ENCODE measurements at regions of chr10 and their contacts with region 1.

Region 1: DNA sequence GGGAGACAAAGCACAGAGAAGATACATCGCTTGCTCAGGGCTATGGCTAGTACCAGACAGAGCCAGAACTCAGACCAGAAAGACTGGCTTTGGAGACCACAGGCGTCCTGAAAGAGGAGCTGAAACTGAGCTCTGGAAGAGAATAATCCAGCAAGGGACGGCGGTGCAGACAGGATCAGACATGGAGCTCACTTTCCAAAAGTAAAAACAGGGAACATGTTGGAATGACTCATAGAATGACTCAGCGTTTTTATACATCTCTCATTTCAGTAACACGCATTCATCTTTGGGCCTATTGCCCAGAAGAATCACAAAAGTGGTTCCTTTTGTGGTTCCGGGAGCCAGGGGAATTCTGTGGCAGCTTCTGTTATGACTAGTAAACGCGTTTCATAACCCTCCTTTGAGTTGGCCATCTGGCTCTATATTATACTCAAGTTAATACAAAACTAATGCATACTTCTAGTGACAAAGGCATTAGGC is 37.2 kb downstream of the PLEKHS1 start:
- DNase-seq: peak in 1 of 2 donors; percentile 51
- H3K4me3 ChIP-seq: peak overlapping the region in 1 of 3 donors; percentile 29
- H3K27ac ChIP-seq: peak overlapping the region; percentile 41 to 50
- H3K4me1 ChIP-seq: no peaks in the 10 kb centered on the region
- H3K27me3 ChIP-seq: no peaks in the 10 kb centered on the region
- CTCF ChIP-seq: no peak
- POLR2A ChIP-seq: no peak

Region 2: DNA sequence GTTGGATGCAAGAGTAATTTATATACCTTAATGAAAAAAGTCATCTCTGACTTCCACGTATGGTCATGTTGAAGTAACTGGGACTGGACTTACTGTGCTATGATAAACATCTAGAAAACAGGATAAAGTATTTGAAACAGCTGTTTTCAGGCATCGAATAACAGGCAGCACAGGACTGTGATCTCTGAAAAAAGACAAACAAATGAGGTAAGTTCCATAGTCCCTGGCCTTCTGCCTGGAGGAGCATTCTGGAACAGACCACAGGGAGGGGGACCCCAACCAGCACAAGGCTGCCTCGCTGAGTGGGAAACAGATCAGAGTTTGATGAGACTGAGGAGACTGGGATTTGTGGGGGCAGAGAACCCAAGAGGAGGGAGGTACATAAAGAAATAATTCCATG is 324.9 kb before region 1 on chr10:
- intact Hi-C with region 1: no loop called
- DNase-seq: no peak
- H3K4me3 ChIP-seq: no peak overlapping the region
- H3K27ac ChIP-seq: peak overlapping the region; percentile 1 to 67
- H3K4me1 ChIP-seq: no peaks in the 10 kb centered on the region
- H3K27me3 ChIP-seq: no peaks in the 10 kb centered on the region
- CTCF ChIP-seq: no peak
- POLR2A ChIP-seq: no peak

Region 3: DNA sequence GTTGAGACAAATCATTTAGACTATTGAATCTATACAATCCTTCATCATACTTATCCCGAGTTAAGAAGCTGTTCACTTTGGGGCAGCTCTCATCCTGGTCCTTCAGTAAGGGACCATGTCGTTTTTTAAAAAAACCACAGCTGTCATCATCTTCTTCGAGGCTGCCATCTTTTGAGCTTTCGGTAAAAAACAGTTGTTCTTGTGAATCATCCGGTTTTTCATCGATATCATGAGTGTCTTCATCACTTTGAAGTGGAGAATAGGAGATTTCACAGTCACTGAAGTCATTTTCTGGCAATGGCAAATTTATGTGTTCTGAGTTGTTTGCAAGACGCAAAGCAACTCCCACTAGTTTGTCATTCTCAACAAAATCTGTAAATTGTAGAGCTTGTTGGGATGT is 61.3 kb after region 1 on chr10:
- intact Hi-C with region 1: loop called (anchors 2 kb)
- DNase-seq: no peak
- H3K4me3 ChIP-seq: no peak overlapping the region
- H3K27ac ChIP-seq: no peak overlapping the region
- H3K4me1 ChIP-seq: no peaks in the 10 kb centered on the region
- H3K27me3 ChIP-seq: no peaks in the 10 kb centered on the region
- CTCF ChIP-seq: no peak
- POLR2A ChIP-seq: no peak

Measured in breast epithelium (tissue), 4 donors.